ENCODE measurements at regions of chr7 and their contacts with region 1.

Region 1: GRCh38 chr7:36995776-36996175 is 271.5 kb upstream of the AOAH start:
- DNase-seq: no peak
- ATAC-seq: no peak
- H3K4me3 Mint-ChIP-seq: no peak overlapping the region
- H3K27ac Mint-ChIP-seq: no peak overlapping the region
- H3K4me1 Mint-ChIP-seq: peaks cover 12% of the 10 kb centered on the region
- H3K27me3 Mint-ChIP-seq: no peaks in the 10 kb centered on the region

Region 2: DNA sequence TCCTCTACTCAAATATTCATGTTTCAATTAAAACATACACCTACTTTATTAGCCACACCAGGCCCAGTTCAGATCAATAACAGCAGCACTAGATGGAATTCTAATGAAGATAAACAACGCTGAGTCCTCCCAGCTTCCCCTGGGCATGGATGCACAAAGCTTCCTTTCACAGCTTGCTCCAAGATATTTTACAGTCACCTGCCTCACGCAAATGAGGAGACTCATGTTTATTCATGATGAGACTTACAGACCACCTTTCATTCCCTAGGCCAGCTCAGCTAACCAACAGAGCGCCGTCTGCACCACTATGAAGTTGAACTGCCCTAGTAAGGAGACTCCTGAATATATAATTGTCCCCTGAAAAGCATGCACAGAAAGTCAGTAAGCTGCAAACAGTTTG is 11.5 kb after region 1 on chr7:
- CTCF ChIA-PET with region 1: interaction called, 10 read pairs
- POLR2A ChIA-PET with region 1: no interaction called
- intact Hi-C with region 1: no loop called
- DNase-seq: no peak
- ATAC-seq: no peak
- H3K4me3 Mint-ChIP-seq: no peak overlapping the region
- H3K27ac Mint-ChIP-seq: no peak overlapping the region
- H3K4me1 Mint-ChIP-seq: no peaks in the 10 kb centered on the region
- H3K27me3 Mint-ChIP-seq: no peaks in the 10 kb centered on the region